Panc1 (cell line): ENCODE measurements at regions of chr14 and their contacts with region 1.

Region 1: GRCh38 chr14:74302634-74303577 is at the start of gene ABCD4:
- DNase-seq: peak; percentile 65
- ATAC-seq: peak; percentile 99
- H3K4me3 ChIP-seq: peak within 1 kb of the TSS; percentile 75 to 83
- H3K27ac ChIP-seq: peak within 1 kb of the TSS; percentile 84
- H3K4me1 ChIP-seq: no peaks in the 10 kb centered on the region
- H3K27me3 ChIP-seq: no peaks in the 10 kb centered on the region
- CTCF ChIP-seq: peak; percentile 85
- total RNA-seq, gene ABCD4: 24.4 TPM

Region 2: DNA sequence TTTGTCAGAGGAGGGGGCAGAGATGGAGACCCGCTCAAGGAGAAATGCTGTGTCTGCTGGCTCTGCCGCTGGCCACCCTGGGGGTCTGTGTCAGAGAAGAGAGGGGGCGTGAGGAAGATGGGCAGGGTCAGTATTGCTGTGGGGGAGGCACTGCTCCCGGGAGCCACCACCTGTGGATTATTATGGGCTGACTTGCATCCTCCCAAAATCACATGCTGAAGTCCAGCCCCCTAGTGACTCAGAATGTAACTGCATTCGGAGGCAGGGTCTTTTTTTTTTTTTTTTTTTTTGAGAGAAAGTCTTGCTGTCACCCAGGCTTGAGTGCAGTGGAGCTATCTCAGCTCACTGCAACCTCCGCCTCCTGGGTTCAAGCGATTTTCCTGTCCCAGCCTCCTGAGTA is 12.5 kb before region 1 on chr14:
- CTCF ChIA-PET with region 1: interaction called, 6 read pairs
- POLR2A ChIA-PET with region 1: interaction called, 16 read pairs
- in situ Hi-C with region 1: no loop called
- intact Hi-C with region 1: no loop called
- DNase-seq: no peak
- ATAC-seq: 0 out of 2 replicates have a peak, but pooled peaks have one; percentile 41
- H3K4me3 ChIP-seq: no peak overlapping the region
- H3K27ac ChIP-seq: no peak overlapping the region
- H3K4me1 ChIP-seq: no peaks in the 10 kb centered on the region
- H3K27me3 ChIP-seq: no peaks in the 10 kb centered on the region
- CTCF ChIP-seq: peak; percentile 72

Region 3: DNA sequence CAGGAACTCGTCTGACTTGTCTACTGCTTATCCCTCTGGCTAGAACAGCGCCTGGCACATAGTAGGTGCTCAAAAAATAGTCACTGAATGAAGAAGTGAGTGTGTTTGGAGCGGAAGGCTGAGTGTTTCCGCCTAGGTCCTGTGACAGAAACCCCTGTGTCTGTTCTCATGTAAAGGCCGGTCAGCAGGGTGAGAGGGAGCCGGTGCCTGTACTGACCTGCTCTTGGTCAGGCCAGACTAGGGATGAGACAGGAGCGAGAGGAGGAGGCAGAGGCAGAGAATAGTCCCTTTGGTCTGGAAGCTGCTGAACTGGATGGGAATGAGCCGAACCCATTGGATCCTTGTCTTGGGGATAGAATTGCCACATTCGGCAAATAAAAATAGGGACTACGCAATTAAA is 65.9 kb after region 1 on chr14:
- CTCF ChIA-PET with region 1: no interaction called
- POLR2A ChIA-PET with region 1: no interaction called
- in situ Hi-C with region 1: no loop called
- intact Hi-C with region 1: no loop called
- DNase-seq: no peak
- ATAC-seq: no peak
- H3K4me3 ChIP-seq: no peak overlapping the region
- H3K27ac ChIP-seq: no peak overlapping the region
- H3K4me1 ChIP-seq: no peaks in the 10 kb centered on the region
- H3K27me3 ChIP-seq: no peaks in the 10 kb centered on the region
- CTCF ChIP-seq: no peak